Mammary epithelial cell (primary cell): ENCODE measurements at regions of chr5 and their contacts with region 1.

Region 1: GRCh38 chr5:178895651-178896571 is at the start of gene ZFP2:
- DNase-seq: peak; percentile 59
- H3K4me3 ChIP-seq: peak within 1 kb of the TSS; percentile 54 to 59 (median 57)
- H3K27ac ChIP-seq: no peak within 1 kb of the TSS
- H3K4me1 ChIP-seq: no peaks in the 10 kb centered on the region
- H3K27me3 ChIP-seq: peaks cover 2% of the 10 kb centered on the region
- CTCF ChIP-seq: no peak
- total RNA-seq, gene ZFP2: 1.0 TPM in 1 of 2 donors, not detected in the other

Region 2: GRCh38 chr5:178777541-178777940 is 118.4 kb before region 1 on chr5:
- CTCF ChIA-PET with region 1: no interaction called
- dilution Hi-C with region 1: no loop called
- in situ Hi-C with region 1: no loop called
- intact Hi-C with region 1: no loop called
- DNase-seq: no peak
- H3K4me3 ChIP-seq: no peak overlapping the region
- H3K27ac ChIP-seq: no peak overlapping the region
- H3K4me1 ChIP-seq: no peaks in the 10 kb centered on the region
- H3K27me3 ChIP-seq: no peaks in the 10 kb centered on the region
- CTCF ChIP-seq: no peak

Region 3: GRCh38 chr5:178859625-178860531 is 36.0 kb before region 1 on chr5 and contains the start of gene ZNF354B:
- CTCF ChIA-PET with region 1: no interaction called
- dilution Hi-C with region 1: no loop called
- in situ Hi-C with region 1: no loop called
- intact Hi-C with region 1: loop called (anchors 2 kb)
- DNase-seq: peak; percentile 91
- H3K4me3 ChIP-seq: peak within 1 kb of the TSS; percentile 64 to 84 (median 72)
- H3K27ac ChIP-seq: peak within 1 kb of the TSS; percentile 49
- H3K4me1 ChIP-seq: peaks cover 15% of the 10 kb centered on the region
- H3K27me3 ChIP-seq: no peaks in the 10 kb centered on the region
- CTCF ChIP-seq: no peak
- total RNA-seq, gene ZNF354B: 14.3 to 15.7 TPM